HAP-1 (cell line): ENCODE measurements at regions of chrX and their contacts with region 1.

Region 1: GRCh38 chrX:50579955-50580354 is 109.3 kb upstream of the DGKK start:
- DNase-seq: peak; percentile 62 to 64
- H3K4me3 ChIP-seq: no peak overlapping the region
- H3K4me1 ChIP-seq: no peaks in the 10 kb centered on the region
- H3K27me3 ChIP-seq: no peaks in the 10 kb centered on the region

Region 2: GRCh38 chrX:49922291-49923241 is 657.4 kb before region 1 on chrX and contains the start of gene CLCN5:
- in situ Hi-C with region 1: loop called (anchors 25 kb)
- DNase-seq: peak; percentile 94 to 98
- H3K4me3 ChIP-seq: peak within 1 kb of the TSS; percentile 86
- H3K4me1 ChIP-seq: peaks cover 13% of the 10 kb centered on the region
- H3K27me3 ChIP-seq: no peaks in the 10 kb centered on the region

Region 3: DNA sequence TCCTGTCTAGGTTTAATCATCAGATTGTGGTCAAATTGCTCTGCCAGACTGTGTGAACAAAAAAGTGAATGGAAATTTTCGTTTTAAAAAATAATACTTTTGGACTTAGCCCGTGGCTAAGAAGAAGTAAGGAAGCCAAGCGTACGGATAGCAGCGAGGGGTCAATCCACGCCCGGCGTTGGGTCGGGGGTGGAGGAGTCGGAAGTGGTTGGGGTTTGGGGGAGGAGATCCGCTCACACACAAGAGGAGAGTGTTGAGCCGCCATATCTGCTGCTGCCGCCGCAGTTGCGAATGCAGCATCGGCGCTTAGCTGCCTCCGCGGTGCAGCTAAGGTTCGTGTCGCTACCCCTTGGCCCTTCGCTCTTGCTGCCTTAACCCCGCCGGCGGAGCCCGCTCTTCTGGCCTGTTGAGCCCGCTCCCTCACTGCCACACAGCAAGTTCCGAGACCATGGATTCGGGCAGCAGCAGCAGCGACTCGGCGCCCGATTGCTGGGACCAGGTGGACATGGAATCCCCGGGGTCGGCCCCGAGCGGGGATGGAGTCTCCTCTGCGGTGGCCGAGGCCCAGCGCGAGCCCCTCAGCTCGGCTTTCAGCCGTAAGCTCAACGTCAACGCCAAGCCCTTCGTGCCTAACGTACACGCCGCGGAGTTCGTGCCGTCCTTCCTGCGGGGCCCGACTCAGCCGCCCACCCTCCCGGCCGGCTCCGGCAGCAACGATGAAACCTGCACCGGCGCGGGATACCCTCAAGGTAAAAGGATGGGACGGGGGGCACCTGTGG is 1163.4 kb after region 1 on chrX and contains the start of gene GSPT2:
- in situ Hi-C with region 1: no loop called
- DNase-seq: no peak
- H3K4me3 ChIP-seq: no peak within 1 kb of the TSS
- H3K4me1 ChIP-seq: peaks cover 10% of the 10 kb centered on the region
- H3K27me3 ChIP-seq: no peaks in the 10 kb centered on the region